ENCODE measurements at regions of chr10 and their contacts with region 1.

Region 1: DNA sequence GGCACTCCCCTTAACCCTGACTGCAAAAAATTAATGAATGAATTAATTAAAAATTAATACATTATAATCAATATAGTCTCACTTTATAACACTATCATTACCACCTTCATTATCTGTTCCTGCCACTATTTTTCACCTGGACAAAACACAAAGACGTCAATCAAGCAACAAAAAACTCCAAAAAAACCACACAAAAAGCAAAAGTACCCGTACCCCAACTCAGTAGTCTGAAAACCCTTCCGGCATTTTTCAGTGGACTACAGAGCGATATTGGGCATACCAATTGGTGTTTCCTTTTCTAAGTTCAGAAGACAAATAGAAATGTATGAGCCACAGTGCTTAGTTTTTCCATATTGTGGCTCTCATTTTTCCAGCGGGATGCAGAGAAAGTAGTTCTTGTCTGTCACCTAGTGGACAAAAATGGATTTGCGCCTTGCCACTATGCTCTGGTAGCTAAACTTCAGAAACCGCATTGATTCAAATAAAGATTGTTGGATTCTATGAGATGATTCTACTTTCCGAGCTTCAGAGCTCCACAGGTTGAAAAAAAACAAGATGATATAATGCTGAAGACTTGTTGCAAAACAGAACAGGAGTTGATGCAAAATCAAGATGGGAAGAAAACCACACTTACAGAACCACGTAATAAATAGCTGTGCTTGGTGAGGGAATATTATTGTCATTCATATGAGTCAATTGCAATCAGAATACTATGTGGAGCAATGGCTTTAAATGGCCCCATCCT is 50.6 kb upstream of the ITGB1 start:
- DNase-seq: no peak
- ATAC-seq: peak; percentile 41

Region 2: DNA sequence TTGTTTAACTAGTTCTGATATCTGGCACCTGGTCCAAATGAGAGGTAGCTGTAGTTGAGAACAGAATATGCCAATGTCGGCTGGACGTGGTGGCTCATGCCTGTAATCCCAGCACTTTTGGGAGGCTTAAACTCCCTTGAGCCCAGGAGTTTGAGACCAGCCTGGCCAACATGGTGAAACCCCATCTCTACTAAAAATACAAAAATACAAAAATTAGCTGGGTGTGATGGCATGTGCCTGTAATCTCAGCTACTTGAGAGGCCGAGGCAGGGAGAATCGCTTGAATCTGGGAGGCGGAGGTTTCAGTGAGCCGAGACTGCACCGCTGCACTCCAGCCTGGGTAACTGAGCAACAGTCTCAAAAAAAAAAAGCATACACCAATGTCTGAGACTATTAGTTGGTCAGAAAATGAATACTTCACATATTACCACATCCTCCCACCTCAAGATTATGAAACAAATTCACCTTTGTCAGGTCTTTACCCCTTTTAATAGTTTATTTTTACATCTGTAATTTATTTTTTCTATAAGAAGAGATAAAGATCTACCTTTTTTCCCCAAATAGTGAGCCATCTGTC is 700.6 kb before region 1 on chr10:
- intact Hi-C with region 1: no loop called
- DNase-seq: no peak
- ATAC-seq: no peak

Region 3: GRCh38 chr10:32795598-32796183 is 213.0 kb before region 1 on chr10:
- intact Hi-C with region 1: loop called (anchors 2 kb)
- DNase-seq: no peak
- ATAC-seq: peak; percentile 23

Region 4: DNA sequence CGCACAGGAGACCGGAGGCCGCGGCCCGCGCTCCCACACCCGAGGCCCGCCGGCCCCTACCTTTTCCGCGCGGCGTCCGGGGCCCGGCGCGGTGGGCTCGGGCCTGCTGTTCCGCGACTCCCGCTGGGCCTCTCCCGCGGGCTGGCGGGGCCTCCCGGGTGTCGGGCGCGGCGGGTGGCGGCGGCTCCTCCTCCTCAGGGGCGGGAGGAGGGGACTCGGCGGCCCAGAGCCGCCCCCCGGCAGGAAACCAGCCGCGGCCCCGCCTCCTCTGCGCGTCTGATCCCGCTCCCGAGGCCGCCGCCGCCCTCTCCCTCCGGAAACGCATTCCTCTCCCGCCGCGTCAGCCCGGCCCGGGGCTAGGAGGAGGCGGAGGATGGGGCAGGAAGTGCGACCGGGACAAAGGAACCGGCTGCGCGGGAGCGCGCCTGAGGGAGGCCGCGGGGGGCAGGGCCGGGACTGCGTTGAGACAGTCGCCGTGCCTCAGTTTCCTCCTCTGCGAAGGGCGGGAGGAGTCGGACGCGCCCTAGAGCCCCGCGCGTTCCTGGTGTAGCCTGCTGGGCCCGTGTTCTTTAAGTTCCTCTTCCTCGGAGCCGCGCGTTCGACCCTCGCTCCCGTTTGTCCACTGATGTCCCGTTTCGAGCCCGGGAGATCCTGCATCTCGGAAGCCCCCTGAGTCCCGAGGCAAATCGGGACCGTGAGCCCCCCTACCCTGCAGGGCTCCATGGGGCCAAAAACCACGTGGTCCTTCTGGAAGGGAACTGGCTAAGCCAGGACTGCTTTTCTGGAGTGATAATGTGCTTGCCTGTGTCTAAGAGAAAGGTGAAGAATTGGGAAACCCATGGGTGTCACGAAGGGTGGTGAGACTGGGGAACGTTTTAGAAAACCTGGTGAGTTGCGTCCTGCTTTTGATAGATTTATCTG is 50.3 kb before region 1 on chr10 and contains the start of gene ITGB1:
- intact Hi-C with region 1: loop called (anchors 10 kb)
- DNase-seq: peak; percentile 99
- ATAC-seq: peak; percentile 95
- total RNA-seq, gene ITGB1: 551 TPM